ENCODE measurements at regions of chr4 and their contacts with region 1.

Region 1: GRCh38 chr4:6986781-6987587 is 56.2 kb upstream of the TADA2B start:
- DNase-seq: peak; percentile 78 to 93
- H3K4me3 ChIP-seq: peak overlapping the region; percentile 66 to 93 (median 80)
- H3K27ac ChIP-seq: peak overlapping the region; percentile 75
- H3K4me1 ChIP-seq: peaks cover 5 to 17% (median 8%) of the 10 kb centered on the region in 4 experiments
- H3K27me3 ChIP-seq: no peaks in the 10 kb centered on the region
- CTCF ChIP-seq: no peak
- EP300 ChIP-seq: peak in 1 of 2 experiments; percentile 4; a peak in 1 of 3 replicates
- POLR2A ChIP-seq: peak; percentile 32 to 63; a peak in 2 of 3 replicates
- RAD21 ChIP-seq: peak in 1 of 2 experiments; percentile 8; a peak in 1 of 4 replicates

Region 2: DNA sequence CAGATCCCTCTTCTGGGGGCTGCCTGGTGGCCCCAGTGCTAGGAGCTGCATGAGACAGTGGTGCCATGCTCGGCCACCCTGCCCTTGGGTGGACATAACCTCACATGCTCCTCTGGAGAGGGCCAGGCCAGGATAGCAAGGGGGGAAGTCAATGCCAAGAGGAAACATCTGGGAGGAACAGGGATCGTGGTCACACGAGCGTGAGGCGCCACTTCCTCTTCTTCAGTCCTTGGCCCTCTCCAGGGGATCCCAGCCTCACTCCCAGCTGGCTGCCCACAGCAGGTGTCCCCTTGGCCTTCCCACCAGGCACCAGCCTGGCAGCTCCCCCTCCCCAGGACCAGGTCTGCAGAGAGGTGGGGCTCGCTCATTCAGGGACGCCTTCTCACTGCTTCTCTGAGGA is 48.7 kb before region 1 on chr4:
- CTCF ChIA-PET with region 1: no interaction called
- POLR2A ChIA-PET with region 1: no interaction called
- DNase-seq: no peak
- H3K4me3 ChIP-seq: no peak overlapping the region
- H3K27ac ChIP-seq: no peak overlapping the region
- H3K4me1 ChIP-seq: peaks cover 8 to 38% (median 21%) of the 10 kb centered on the region in 4 experiments
- H3K27me3 ChIP-seq: no peaks in the 10 kb centered on the region
- CTCF ChIP-seq: no peak
- EP300 ChIP-seq: no peak
- POLR2A ChIP-seq: no peak
- RAD21 ChIP-seq: no peak

Region 3: DNA sequence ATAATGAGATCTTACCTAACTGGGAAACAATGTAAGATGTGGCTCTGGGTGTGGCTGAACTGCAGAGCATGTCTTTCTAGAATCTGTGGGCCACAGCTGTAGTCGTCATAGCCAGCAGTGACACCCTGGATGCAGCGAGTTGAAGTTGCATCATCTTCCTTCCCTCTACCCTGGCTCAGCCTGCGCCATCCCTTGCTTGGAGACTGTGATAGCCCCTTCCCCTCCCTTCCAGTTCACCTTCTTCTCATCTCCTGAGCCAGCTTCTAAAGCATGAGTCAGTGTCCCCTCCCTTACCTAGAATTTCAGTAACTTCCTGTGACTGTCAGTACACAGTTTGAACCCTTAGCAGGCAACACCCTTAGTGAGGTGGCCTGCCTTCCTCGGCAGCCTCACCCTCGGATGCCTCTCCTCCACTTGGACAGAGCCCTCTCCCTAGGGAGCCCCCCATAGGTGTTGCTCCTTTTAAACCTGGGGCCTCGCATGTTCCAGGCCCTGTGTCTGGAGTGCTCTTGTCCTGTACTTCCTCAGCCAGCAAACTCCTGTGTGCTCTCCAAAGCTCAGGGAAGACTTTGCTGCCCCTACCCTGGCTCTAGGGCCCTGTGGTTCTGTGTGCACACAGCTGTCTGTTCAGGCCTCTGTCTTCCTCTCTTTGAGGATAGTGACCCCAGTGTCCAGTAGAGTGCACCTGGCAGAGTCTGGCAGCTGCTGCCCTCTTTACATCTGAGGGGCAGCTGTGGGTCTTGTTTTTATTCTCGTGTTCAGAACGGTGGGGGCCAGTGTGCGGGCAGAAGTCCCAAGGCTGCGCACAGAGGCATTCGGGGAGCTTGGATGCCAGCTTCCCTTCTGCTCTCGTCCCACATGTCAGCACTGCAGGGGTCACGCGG is 12.4 kb after region 1 on chr4:
- CTCF ChIA-PET with region 1: no interaction called
- POLR2A ChIA-PET with region 1: interaction called, 15 read pairs
- DNase-seq: no peak
- H3K4me3 ChIP-seq: no peak overlapping the region
- H3K27ac ChIP-seq: no peak overlapping the region
- H3K4me1 ChIP-seq: no peaks in the 10 kb centered on the region
- H3K27me3 ChIP-seq: no peaks in the 10 kb centered on the region
- CTCF ChIP-seq: no peak
- EP300 ChIP-seq: no peak
- POLR2A ChIP-seq: no peak
- RAD21 ChIP-seq: no peak

Region 4: DNA sequence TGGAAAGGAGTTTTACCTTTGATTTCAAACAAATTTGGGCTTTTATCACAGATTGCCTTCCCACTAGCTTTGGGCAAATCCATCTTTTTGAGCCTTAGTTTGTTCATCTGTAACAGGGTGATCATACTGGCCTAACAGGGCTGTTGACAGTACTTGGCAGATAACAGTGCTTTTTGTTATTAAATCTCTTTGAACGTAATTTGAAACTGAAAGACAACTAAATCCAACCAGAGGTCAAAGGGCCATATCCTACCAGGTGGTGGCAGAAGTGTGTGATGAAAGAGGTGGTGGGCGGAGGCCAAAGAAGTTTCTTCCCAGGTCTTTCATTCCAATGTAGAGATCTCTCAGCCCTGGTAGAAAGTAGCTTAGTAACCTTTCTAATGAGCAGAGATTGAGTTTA is 21.0 kb after region 1 on chr4:
- CTCF ChIA-PET with region 1: interaction called, 14 read pairs
- POLR2A ChIA-PET with region 1: interaction called, 21 read pairs
- DNase-seq: no peak
- H3K4me3 ChIP-seq: peak overlapping the region in 2 of 4 experiments; percentile 1 to 11; a peak in 1 of 8 replicates
- H3K27ac ChIP-seq: no peak overlapping the region
- H3K4me1 ChIP-seq: peaks cover 2 to 8% (median 6%) of the 10 kb centered on the region in 4 experiments; a peak in 6 of 7 replicates
- H3K27me3 ChIP-seq: no peaks in the 10 kb centered on the region
- CTCF ChIP-seq: peak in 1 of 3 experiments; percentile 8; a peak in 2 of 4 replicates
- EP300 ChIP-seq: no peak
- POLR2A ChIP-seq: no peak
- RAD21 ChIP-seq: 0 out of 4 replicates have a peak, but pooled peaks of 1 of the 2 experiments have one; percentile 13